ENCODE measurements at regions of chr3 and their contacts with region 1.

Region 1: DNA sequence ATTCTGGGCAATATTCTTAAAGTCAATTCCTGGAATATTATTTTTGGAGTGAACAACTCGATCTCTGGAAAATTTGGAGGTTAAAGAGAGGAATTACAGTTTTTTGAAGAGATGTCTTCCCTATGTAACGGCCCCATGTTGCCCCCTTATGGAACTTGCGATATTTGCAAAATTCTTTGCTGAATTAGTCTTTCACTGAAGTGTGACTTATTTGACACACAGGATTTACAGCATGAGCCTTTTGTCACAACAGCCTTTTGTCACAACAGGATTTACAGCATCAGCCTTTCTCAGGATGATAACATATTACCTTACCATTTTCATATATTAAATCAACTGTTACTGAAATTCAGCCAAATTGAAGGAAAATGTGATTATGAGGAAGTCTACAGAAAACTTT is 37.8 kb upstream of the SPTSSB start:
- DNase-seq: no peak
- ATAC-seq: no peak

Region 2: GRCh38 chr3:161305095-161305991 is 103.7 kb before region 1 on chr3:
- intact Hi-C with region 1: loop called (anchors 10 kb)
- DNase-seq: no peak
- ATAC-seq: no peak

Region 3: GRCh38 chr3:161372327-161373260 is 36.5 kb before region 1 on chr3:
- intact Hi-C with region 1: no loop called
- DNase-seq: no peak
- ATAC-seq: peak; percentile 76

Region 4: GRCh38 chr3:161957467-161957866 is 548.4 kb after region 1 on chr3:
- intact Hi-C with region 1: no loop called
- DNase-seq: no peak
- ATAC-seq: no peak